A673 (cell line): ENCODE measurements at regions of chr6 and their contacts with region 1.

Region 1: DNA sequence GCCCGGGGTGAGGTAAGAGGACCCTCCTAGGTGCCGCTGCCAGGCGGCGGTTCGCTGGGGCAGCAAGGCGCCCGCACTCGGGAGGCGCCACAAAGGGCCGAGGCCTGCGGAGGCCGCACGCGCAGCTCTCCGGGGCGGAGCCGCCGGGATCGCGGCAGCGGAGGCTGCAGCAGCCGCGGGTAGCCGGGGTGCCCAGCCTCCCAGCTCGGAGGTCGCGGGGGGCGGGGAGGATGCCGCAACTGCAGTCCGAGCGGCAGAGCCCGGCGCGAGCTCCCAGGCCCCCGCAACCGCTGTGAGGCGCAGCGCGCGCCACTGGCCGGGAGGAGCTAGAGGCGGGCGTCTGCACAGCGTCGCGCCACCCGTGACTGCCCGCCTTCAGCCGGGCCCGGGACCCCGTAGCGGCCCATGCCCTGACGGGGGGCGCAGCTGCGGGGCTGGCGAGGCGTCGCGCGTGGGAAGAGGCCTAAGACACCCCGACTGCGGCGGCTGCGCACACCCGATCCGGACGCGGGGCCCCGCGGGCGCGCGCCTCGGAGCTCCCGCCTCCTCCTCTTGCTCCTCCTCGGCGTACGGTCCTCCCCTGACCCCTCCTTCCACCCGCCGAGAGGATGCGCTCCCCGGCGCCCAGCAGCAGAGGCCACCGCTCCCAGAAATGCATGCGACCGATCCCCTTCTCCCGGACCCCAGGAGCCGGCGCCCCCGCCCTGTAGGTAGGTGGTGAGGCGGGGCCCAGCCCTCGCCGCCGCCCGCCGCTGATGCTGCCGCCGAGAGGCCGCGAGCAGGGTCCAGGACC is at the start of gene NCOA7:
- DNase-seq: peak; percentile 80
- H3K4me3 ChIP-seq: peak within 1 kb of the TSS; percentile 95
- H3K27ac ChIP-seq: peak within 1 kb of the TSS; percentile 97
- H3K4me1 ChIP-seq: peaks cover 60% of the 10 kb centered on the region
- H3K27me3 ChIP-seq: no peaks in the 10 kb centered on the region
- CTCF ChIP-seq: no peak
- total RNA-seq, gene NCOA7: 30.1 and 33.5 TPM in 2 replicates

Region 2: DNA sequence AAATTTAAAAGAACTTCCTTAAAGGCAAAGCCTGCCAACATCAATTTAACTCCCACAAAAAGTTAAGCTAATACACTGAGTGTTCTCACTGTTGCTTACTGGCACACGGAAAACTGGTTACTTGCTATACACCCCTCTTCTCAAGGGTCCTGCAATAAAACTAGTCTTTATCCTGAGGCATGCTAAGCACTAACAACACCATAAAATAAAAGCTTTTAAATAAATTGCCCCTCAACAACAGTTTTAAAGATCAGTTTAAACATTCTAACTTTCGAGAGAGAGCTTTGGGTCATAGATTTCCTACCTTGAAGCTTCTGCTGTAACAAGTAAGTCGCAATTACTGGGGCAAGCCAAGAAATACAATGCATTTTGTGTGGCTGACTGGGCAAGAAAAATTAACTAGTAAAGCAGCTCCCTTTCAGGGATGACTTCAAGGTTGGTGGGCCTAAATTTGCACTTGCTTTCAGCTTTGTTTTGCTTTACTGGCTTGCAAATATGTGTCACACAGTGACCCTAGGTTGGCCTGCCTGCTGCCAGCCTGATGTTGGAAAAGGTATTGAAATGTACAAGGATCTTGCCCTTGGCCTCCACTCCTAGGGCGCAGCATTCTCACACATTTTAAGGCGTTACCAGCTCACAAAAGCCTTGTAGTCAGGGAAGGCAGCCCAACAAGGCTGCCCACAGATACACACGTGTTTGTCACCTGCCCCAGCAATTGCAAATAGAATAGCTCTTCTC is 45.1 kb before region 1 on chr6:
- CTCF ChIA-PET with region 1: no interaction called
- POLR2A ChIA-PET with region 1: no interaction called
- intact Hi-C with region 1: no loop called
- DNase-seq: no peak
- H3K4me3 ChIP-seq: no peak overlapping the region
- H3K27ac ChIP-seq: no peak overlapping the region
- H3K4me1 ChIP-seq: peaks cover 8% of the 10 kb centered on the region
- H3K27me3 ChIP-seq: peaks cover 69% of the 10 kb centered on the region
- CTCF ChIP-seq: no peak

Region 3: GRCh38 chr6:125779924-125780539 is 10.5 kb before region 1 on chr6:
- CTCF ChIA-PET with region 1: interaction called, 15 read pairs
- POLR2A ChIA-PET with region 1: interaction called, 10 read pairs
- intact Hi-C with region 1: no loop called
- DNase-seq: peak; percentile 96
- H3K4me3 ChIP-seq: peak overlapping the region; percentile 54
- H3K27ac ChIP-seq: peak overlapping the region; percentile 82
- H3K4me1 ChIP-seq: peaks cover 17% of the 10 kb centered on the region
- H3K27me3 ChIP-seq: no peaks in the 10 kb centered on the region
- CTCF ChIP-seq: no peak

Region 4: DNA sequence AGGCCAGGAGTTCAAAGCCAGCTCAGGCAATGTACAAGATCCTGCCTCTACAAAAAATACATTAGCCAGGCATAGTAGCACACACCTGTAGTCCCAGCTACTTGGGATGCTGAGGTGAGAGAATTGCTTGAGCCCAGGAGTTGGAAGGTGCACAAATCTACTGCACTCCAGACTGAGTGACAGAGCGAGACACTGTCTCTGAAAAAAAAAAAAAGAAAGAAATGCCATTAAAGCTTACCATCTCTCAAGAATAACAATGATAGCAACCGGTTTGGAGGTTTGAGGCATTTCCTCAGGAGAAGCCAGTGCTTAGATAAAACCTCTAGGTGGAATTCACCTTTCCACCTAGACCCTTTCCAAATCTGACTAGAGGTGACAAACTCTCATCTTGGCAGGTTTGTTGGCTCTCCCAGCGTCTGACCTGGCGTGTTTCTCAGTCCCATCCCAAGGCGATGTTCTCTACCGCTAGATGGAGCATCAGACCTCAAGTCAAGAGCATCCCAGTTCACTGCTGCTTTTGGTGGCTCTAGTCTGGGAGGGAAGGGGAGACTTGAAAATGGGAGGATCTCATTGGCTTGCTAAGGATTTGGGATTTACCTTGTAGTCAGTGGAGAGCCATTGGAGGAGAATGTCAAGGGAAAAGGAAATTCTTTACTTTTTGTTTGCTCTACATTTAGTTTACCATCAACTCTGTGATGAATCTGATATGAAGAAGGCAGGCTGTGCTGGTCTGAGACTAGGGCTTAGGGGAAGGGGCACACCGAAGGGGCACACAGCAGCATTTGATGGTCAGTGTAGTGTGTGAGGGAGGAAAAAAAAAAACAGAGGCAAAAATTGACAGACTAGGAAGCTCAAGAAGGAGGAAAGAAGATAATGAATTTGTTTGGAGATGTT is 68.1 kb after region 1 on chr6:
- CTCF ChIA-PET with region 1: interaction called, 3 read pairs
- POLR2A ChIA-PET with region 1: no interaction called
- intact Hi-C with region 1: loop called (anchors 2 kb)
- DNase-seq: peak; percentile 74
- H3K4me3 ChIP-seq: no peak overlapping the region
- H3K27ac ChIP-seq: no peak overlapping the region
- H3K4me1 ChIP-seq: no peaks in the 10 kb centered on the region
- H3K27me3 ChIP-seq: no peaks in the 10 kb centered on the region
- CTCF ChIP-seq: peak; percentile 77